ENCODE measurements at regions of chr19 and their contacts with region 1.

Region 1: DNA sequence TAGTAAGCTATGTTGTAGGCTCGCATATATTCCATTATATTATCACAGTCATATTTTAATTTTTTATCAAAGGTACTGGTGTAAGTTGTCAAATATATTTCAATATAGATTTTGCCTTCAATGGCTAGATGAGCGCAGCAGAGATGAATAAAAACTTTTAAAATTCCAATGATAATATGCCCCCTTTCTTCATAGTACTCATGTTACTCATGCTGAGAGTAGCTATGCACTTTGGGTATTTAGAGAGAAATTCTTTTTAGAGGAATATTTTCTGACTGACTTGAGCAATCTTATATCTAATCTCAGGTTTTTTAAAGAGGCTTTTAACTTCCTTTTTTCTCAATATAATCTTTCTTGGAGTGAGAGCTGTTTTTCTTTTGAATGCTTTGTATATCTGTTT is 11.4 kb downstream of the ZNF254 start:
- DNase-seq: no peak
- ATAC-seq: no peak
- H3K4me3 Mint-ChIP-seq: no peak overlapping the region
- H3K27ac Mint-ChIP-seq: no peak overlapping the region
- H3K4me1 Mint-ChIP-seq: peaks cover 17% of the 10 kb centered on the region
- H3K27me3 Mint-ChIP-seq: no peaks in the 10 kb centered on the region
- CTCF ChIP-seq: no peak

Region 2: GRCh38 chr19:22634450-22634827 is 1463.9 kb before region 1 on chr19:
- CTCF ChIA-PET with region 1: no interaction called
- POLR2A ChIA-PET with region 1: interaction called, 13 read pairs
- intact Hi-C with region 1: no loop called
- DNase-seq: no peak
- ATAC-seq: peak; percentile 12
- H3K4me3 Mint-ChIP-seq: peak overlapping the region; percentile 93
- H3K27ac Mint-ChIP-seq: peak overlapping the region; percentile 70
- H3K4me1 Mint-ChIP-seq: peaks cover 9% of the 10 kb centered on the region
- H3K27me3 Mint-ChIP-seq: no peaks in the 10 kb centered on the region
- CTCF ChIP-seq: no peak

Region 3: GRCh38 chr19:23969630-23970029 is 128.7 kb before region 1 on chr19:
- CTCF ChIA-PET with region 1: no interaction called
- POLR2A ChIA-PET with region 1: no interaction called
- intact Hi-C with region 1: no loop called
- DNase-seq: no peak
- ATAC-seq: no peak
- H3K4me3 Mint-ChIP-seq: no peak overlapping the region
- H3K27ac Mint-ChIP-seq: no peak overlapping the region
- H3K4me1 Mint-ChIP-seq: no peaks in the 10 kb centered on the region
- H3K27me3 Mint-ChIP-seq: peaks cover 16% of the 10 kb centered on the region
- CTCF ChIP-seq: no peak

Region 4: DNA sequence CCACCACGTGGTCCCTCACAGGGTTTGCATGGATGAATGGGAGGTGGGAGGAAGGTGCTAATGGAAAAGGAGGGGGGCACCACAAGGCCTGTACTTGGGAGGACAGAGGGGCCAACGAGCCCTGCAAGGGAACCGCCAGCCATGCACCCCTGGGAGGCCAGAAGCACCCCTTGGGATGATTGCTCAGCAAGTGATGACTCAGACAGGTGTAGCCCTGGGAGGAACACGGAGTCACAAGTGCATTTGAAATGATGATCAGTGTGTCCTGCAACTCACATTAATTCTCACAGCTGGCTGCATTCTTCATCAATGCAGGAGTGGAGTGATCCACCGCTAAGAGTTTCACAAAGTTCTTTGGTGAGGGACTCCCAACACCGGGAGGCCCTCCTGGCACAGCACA is 94.2 kb before region 1 on chr19:
- CTCF ChIA-PET with region 1: no interaction called
- POLR2A ChIA-PET with region 1: no interaction called
- intact Hi-C with region 1: no loop called
- DNase-seq: no peak
- ATAC-seq: no peak
- H3K4me3 Mint-ChIP-seq: no peak overlapping the region
- H3K27ac Mint-ChIP-seq: no peak overlapping the region
- H3K4me1 Mint-ChIP-seq: no peaks in the 10 kb centered on the region
- H3K27me3 Mint-ChIP-seq: no peaks in the 10 kb centered on the region
- CTCF ChIP-seq: no peak

Region 5: GRCh38 chr19:24081056-24081455 is 17.3 kb before region 1 on chr19:
- CTCF ChIA-PET with region 1: no interaction called
- POLR2A ChIA-PET with region 1: no interaction called
- intact Hi-C with region 1: no loop called
- DNase-seq: no peak
- ATAC-seq: no peak
- H3K4me3 Mint-ChIP-seq: no peak overlapping the region
- H3K27ac Mint-ChIP-seq: no peak overlapping the region
- H3K4me1 Mint-ChIP-seq: no peaks in the 10 kb centered on the region
- H3K27me3 Mint-ChIP-seq: no peaks in the 10 kb centered on the region
- CTCF ChIP-seq: no peak